ENCODE measurements at regions of chr6 and their contacts with region 1.

Region 1: GRCh38 chr6:131923356-131923755 is 27.8 kb downstream of the CCN2 start:
- DNase-seq: peak; percentile 74
- H3K4me3 ChIP-seq: no peak overlapping the region
- H3K27ac ChIP-seq: no peak overlapping the region
- H3K4me1 ChIP-seq: no peaks in the 10 kb centered on the region
- H3K27me3 ChIP-seq: no peaks in the 10 kb centered on the region
- CTCF ChIP-seq: peak; percentile 81

Region 2: GRCh38 chr6:131627724-131628682 is 295.4 kb before region 1 on chr6 and contains the start of gene MED23:
- CTCF ChIA-PET with region 1: no interaction called
- POLR2A ChIA-PET with region 1: no interaction called
- intact Hi-C with region 1: no loop called
- DNase-seq: peak; percentile 96
- H3K4me3 ChIP-seq: peak within 1 kb of the TSS; percentile 72
- H3K27ac ChIP-seq: peak within 1 kb of the TSS; percentile 64
- H3K4me1 ChIP-seq: peaks cover 17% of the 10 kb centered on the region
- H3K27me3 ChIP-seq: no peaks in the 10 kb centered on the region
- CTCF ChIP-seq: peak; percentile 100
- total RNA-seq, gene MED23: 31.7 and 32.3 TPM in 2 replicates

Region 3: GRCh38 chr6:132161283-132161682 is 237.9 kb after region 1 on chr6:
- CTCF ChIA-PET with region 1: no interaction called
- POLR2A ChIA-PET with region 1: no interaction called
- intact Hi-C with region 1: loop called (anchors 1 kb)
- DNase-seq: peak; percentile 64
- H3K4me3 ChIP-seq: no peak overlapping the region
- H3K27ac ChIP-seq: no peak overlapping the region
- H3K4me1 ChIP-seq: no peaks in the 10 kb centered on the region
- H3K27me3 ChIP-seq: no peaks in the 10 kb centered on the region
- CTCF ChIP-seq: peak; percentile 66

Region 4: DNA sequence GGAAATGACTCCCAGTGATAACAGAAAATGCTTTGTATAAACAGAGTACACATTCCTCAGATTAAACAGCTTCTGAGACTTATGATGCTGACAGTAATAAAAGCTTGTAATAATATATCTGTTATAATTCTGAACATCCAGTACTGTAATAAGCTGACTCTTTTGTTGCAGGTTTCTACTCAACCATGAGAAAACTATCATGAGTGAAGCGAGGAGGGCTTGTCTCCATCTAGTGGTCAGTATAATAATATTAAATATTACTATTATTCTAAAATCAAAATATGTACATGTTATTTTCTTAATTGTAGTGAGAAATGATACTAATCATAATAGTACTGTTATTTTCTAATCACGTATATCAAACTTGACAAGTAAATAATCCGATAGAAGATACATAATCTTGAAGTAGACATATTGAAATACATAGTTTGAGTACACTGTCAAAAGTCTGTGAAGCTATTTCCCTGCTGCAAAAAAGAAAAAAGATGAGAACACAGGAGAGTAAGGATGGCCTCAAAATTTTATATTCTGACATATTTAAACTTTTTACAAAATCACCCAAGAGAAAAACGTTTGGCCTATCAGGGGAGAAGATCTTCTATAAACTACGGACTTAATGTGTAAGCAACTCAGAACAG is 294.8 kb after region 1 on chr6:
- CTCF ChIA-PET with region 1: interaction called, 7 read pairs
- POLR2A ChIA-PET with region 1: no interaction called
- intact Hi-C with region 1: loop called (anchors 2 kb)
- DNase-seq: peak; percentile 35
- H3K4me3 ChIP-seq: no peak overlapping the region
- H3K27ac ChIP-seq: no peak overlapping the region
- H3K4me1 ChIP-seq: no peaks in the 10 kb centered on the region
- H3K27me3 ChIP-seq: no peaks in the 10 kb centered on the region
- CTCF ChIP-seq: peak; percentile 64; the same call in 1 of the 2 replicates

Region 5: DNA sequence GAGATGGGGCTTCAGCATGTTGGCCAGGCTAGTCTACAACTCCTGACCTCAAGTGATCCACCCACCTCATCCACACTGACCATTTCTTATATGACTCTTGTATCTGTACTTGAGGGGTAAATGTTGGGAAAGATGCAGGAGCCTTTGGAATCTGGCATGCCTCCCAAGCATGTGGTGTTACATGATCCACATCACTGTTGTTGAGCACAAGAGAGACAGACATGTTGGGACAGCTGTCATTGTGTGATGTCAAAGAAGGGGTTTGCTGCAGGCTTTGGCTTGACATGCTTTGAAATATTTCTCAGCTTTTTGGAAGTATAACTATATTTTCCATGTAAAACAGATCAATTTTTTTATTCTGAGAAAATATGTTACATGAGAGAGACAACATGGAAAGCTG is 338.0 kb after region 1 on chr6:
- CTCF ChIA-PET with region 1: interaction called, 9 read pairs
- POLR2A ChIA-PET with region 1: no interaction called
- intact Hi-C with region 1: loop called (anchors 10 kb)
- DNase-seq: no peak
- H3K4me3 ChIP-seq: no peak overlapping the region
- H3K27ac ChIP-seq: no peak overlapping the region
- H3K4me1 ChIP-seq: no peaks in the 10 kb centered on the region
- H3K27me3 ChIP-seq: peaks cover 17% of the 10 kb centered on the region
- CTCF ChIP-seq: no peak

Region 6: GRCh38 chr6:132279592-132280139 is 356.3 kb after region 1 on chr6:
- CTCF ChIA-PET with region 1: interaction called, 12 read pairs
- POLR2A ChIA-PET with region 1: no interaction called
- intact Hi-C with region 1: no loop called
- DNase-seq: peak; percentile 83
- H3K4me3 ChIP-seq: peak overlapping the region; percentile 44
- H3K27ac ChIP-seq: no peak overlapping the region
- H3K4me1 ChIP-seq: no peaks in the 10 kb centered on the region
- H3K27me3 ChIP-seq: peaks cover 28% of the 10 kb centered on the region
- CTCF ChIP-seq: peak; percentile 99

Region 7: DNA sequence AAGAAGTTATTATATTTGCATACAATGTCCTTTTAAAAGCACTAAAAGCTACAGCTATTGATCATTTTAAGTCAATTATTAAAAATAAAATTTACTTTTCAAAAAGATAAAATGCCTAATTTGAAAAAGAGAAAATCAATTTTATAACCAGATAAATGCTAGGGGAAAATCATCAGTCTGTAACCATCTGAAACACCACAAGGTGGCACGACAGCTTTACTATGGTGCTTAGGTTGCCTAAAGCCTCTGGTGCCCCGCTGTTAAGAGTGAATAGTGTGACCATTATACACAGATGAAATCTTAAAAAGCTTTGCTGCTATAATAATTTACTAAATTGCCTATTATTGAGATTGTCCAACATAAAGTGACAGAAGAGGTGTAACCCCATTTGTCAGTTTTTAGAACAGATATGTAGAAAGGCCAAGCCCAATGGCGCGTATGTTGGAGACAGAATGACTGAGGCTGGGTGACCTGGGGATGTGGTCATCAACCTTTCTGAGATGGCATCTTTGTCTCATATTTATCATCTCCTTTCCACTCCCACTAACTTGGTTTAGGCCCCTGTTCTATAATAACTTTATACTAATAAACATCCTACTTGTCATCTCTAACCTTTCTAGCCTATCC is 377.1 kb after region 1 on chr6:
- CTCF ChIA-PET with region 1: interaction called, 4 read pairs
- POLR2A ChIA-PET with region 1: no interaction called
- intact Hi-C with region 1: loop called (anchors 5 kb)
- DNase-seq: peak; percentile 62
- H3K4me3 ChIP-seq: no peak overlapping the region
- H3K27ac ChIP-seq: no peak overlapping the region
- H3K4me1 ChIP-seq: no peaks in the 10 kb centered on the region
- H3K27me3 ChIP-seq: peaks cover 23% of the 10 kb centered on the region
- CTCF ChIP-seq: peak; percentile 71

Region 8: DNA sequence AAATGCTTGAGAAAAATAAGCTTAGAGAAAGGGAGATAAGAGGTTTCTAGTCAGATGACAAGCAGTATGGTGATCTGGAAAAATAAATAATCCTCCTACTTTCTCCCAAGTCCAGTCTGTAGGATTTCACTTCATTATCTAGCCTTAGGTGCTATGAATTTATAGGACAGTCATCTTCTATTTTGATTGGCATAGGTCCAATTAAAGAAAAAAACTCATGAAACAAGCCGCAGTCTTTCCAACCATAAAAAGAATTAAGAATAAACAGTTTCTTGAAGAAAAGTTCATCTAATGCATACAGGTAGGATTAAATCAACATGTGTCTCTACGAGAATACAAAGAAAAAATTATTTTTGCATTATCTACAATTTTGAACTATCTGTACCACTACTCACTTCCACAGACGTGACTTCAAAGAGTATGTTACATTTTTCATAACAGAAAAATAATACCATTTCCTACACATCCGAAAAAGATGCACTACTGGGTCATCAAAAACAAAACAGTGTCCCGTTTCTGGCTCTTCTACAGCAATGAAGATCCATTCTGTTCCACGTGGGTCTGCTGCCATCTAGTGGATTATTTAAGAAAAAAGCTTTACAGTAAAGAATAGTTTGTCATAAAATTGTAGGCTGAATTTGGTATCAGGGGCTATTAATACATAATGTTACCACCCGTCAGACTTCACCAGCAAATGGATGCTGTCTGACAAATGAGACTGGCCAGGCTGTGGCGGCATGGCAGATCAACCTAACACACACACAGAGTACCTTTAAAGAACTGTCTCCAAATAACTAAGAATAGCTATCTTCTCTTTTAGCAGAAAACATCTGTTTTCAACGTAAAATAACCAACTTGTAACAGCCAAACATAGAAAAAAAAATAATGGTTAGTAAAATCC is 560.7 kb after region 1 on chr6:
- CTCF ChIA-PET with region 1: interaction called, 8 read pairs
- POLR2A ChIA-PET with region 1: no interaction called
- intact Hi-C with region 1: loop called (anchors 5 kb)
- DNase-seq: peak; percentile 76
- H3K4me3 ChIP-seq: no peak overlapping the region
- H3K27ac ChIP-seq: no peak overlapping the region
- H3K4me1 ChIP-seq: peaks cover 2% of the 10 kb centered on the region
- H3K27me3 ChIP-seq: no peaks in the 10 kb centered on the region
- CTCF ChIP-seq: peak; percentile 70

Region 9: GRCh38 chr6:132872923-132873322 is 949.6 kb after region 1 on chr6:
- CTCF ChIA-PET with region 1: no interaction called
- POLR2A ChIA-PET with region 1: no interaction called
- intact Hi-C with region 1: no loop called
- DNase-seq: no peak
- H3K4me3 ChIP-seq: no peak overlapping the region
- H3K27ac ChIP-seq: no peak overlapping the region
- H3K4me1 ChIP-seq: no peaks in the 10 kb centered on the region
- H3K27me3 ChIP-seq: peaks cover 5% of the 10 kb centered on the region
- CTCF ChIP-seq: no peak